MCF 10A (cell line): ENCODE measurements at regions of chr10 and their contacts with region 1.

Region 1: GRCh38 chr10:119761106-119761505 is 35.3 kb downstream of the INPP5F start:
- DNase-seq: peak; percentile 64
- H3K4me3 Mint-ChIP-seq: no peak overlapping the region
- H3K27ac Mint-ChIP-seq: no peak overlapping the region
- H3K4me1 Mint-ChIP-seq: peaks cover 13% of the 10 kb centered on the region
- H3K27me3 Mint-ChIP-seq: no peaks in the 10 kb centered on the region
- CTCF ChIP-seq: no peak

Region 2: GRCh38 chr10:119737827-119738226 is 23.3 kb before region 1 on chr10:
- CTCF ChIA-PET with region 1: no interaction called
- POLR2A ChIA-PET with region 1: interaction called, 11 read pairs
- intact Hi-C with region 1: no loop called
- DNase-seq: peak; percentile 81
- H3K4me3 Mint-ChIP-seq: peak overlapping the region; percentile 68
- H3K27ac Mint-ChIP-seq: peak overlapping the region; percentile 86
- H3K4me1 Mint-ChIP-seq: peaks cover 18% of the 10 kb centered on the region
- H3K27me3 Mint-ChIP-seq: no peaks in the 10 kb centered on the region
- CTCF ChIP-seq: no peak